ENCODE measurements at regions of chr11 and their contacts with region 1.

Region 1: GRCh38 chr11:3091791-3092602 is 34.8 kb upstream of the CARS1 start:
- DNase-seq: peak; percentile 83
- ATAC-seq: peak; percentile 92
- H3K4me3 Mint-ChIP-seq: no peak overlapping the region
- H3K27ac Mint-ChIP-seq: no peak overlapping the region
- H3K4me1 Mint-ChIP-seq: peaks cover 6% of the 10 kb centered on the region
- H3K27me3 Mint-ChIP-seq: peaks cover 3% of the 10 kb centered on the region

Region 2: GRCh38 chr11:2885676-2886081 is 206.3 kb before region 1 on chr11 and contains the start of gene CDKN1C:
- CTCF ChIA-PET with region 1: interaction called, 37 read pairs
- DNase-seq: peak; percentile 83
- ATAC-seq: peak; percentile 92
- H3K4me3 Mint-ChIP-seq: peak within 1 kb of the TSS; percentile 75
- H3K27ac Mint-ChIP-seq: no peak within 1 kb of the TSS
- H3K4me1 Mint-ChIP-seq: peaks cover 9% of the 10 kb centered on the region
- H3K27me3 Mint-ChIP-seq: peaks cover 35% of the 10 kb centered on the region
- total RNA-seq, gene CDKN1C: 0.44 to 0.87 TPM

Region 3: DNA sequence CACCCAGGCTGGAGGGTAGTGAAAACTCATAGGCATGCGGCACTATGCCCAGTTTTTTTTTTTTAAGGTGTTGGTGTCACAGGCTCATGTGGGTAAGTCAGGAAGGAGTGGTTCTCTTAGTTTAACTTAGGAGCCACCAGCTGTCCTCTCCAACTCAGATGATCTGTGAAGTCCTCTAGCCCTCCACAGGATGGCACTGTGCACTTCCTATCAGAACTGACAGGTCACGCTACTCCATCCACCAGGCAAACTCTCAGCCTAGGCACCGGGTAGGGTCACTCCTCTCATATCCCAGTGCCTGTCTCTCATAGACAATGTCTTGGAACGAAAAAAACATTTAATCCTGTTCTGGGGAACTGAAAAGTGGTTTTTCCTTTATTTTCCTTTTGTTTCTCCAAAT is 116.4 kb before region 1 on chr11:
- CTCF ChIA-PET with region 1: interaction called, 22 read pairs
- DNase-seq: peak; percentile 69
- ATAC-seq: peak; percentile 86
- H3K4me3 Mint-ChIP-seq: no peak overlapping the region
- H3K27ac Mint-ChIP-seq: peak overlapping the region; percentile 64
- H3K4me1 Mint-ChIP-seq: peaks cover 41% of the 10 kb centered on the region
- H3K27me3 Mint-ChIP-seq: no peaks in the 10 kb centered on the region

Region 4: DNA sequence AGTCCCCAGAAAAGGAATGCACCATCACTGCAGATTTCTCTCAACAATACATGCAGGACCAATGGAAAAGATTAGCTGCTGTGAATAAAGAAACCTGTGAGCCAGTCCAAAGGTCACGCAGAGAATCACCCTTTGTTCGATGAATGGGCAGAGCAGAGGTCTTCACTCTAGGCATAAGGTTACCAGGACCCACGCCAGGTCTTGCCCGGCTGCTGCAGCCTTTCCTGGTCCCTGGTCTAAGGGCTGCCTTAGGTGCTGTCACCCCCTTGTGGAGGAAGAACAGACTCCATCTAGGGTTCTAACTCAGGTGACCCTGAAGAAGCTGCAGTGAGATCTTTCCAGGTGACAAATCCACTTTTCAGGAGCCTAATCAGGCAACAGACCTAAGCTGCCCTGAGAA is 70.9 kb before region 1 on chr11:
- CTCF ChIA-PET with region 1: interaction called, 31 read pairs
- DNase-seq: peak; percentile 68
- ATAC-seq: peak; percentile 74
- H3K4me3 Mint-ChIP-seq: no peak overlapping the region
- H3K27ac Mint-ChIP-seq: no peak overlapping the region
- H3K4me1 Mint-ChIP-seq: peaks cover 67% of the 10 kb centered on the region
- H3K27me3 Mint-ChIP-seq: no peaks in the 10 kb centered on the region

Region 5: DNA sequence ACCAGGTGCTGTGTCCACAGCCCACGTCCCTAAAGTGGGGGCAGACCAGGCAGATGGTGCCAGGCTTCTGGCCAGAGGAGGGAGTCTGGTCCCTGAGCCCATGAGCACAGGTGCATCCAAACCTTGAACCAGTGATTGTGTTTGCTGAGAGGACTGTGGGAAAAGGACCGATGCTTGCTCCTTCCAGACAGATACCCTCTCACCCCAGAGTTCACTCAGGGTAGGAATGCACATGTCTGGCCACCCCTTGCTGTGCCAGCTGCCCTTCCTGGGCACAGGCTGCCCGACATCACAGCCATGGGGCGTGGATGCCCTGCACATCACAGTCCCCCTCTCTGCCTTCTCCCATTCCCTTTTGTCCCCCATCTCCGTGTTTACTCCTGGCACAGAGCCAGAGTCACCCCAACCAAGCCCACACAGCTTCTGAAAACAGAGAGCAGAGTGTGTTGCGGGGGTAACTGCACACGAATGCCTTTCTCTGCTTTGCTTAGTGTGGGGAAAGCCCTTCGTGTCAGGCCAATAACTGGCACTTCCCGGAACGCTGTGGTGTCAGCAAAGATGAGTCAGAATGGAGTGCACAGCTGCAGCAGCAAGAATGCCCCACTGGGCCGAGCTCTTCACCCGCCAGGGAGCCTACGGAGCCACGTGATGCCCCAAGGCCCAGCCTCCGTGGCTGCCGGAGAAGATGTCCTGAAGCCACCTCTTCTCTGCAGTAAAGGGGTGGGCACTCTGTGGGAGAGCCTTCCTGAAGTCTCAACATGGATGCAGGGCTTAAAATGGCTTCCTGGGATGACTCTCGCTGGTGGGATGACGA is 42.4 kb before region 1 on chr11:
- CTCF ChIA-PET with region 1: interaction called, 70 read pairs
- DNase-seq: peak; percentile 93
- ATAC-seq: peak; percentile 98
- H3K4me3 Mint-ChIP-seq: peak overlapping the region; percentile 58
- H3K27ac Mint-ChIP-seq: peak overlapping the region; percentile 97
- H3K4me1 Mint-ChIP-seq: peaks cover 52% of the 10 kb centered on the region
- H3K27me3 Mint-ChIP-seq: no peaks in the 10 kb centered on the region

Region 6: DNA sequence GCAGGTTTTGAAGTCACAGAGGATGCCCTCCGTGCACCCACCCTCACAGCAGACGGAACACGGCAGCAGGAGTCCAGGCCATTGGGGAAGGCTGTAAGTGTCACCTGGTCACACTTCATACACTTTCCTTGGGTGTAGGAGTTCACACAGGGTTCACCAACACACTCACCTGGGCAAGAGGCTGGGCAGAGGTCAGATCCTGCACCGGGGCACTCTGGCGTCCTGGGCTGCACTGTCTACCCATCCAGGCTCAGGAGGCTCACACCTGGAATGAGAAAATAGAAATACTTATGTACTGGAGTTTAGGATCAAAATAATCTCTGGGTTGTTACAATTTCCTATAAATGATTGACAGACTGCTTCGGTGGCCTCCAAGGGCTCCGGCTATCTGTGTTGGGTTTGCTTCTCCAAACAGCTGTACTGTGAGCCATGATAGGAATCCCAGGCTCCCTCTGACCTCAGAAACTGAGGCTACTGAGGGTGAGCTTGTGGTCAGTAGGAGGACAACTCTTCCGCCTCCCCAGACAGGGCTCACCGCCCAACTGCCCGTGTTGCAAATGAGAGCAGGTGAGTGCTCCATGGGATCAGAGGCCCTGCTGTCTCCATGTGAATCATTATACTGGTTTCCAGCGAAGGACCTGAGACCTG is 14.7 kb before region 1 on chr11:
- CTCF ChIA-PET with region 1: interaction called, 10 read pairs
- DNase-seq: no peak
- ATAC-seq: no peak
- H3K4me3 Mint-ChIP-seq: no peak overlapping the region
- H3K27ac Mint-ChIP-seq: no peak overlapping the region
- H3K4me1 Mint-ChIP-seq: no peaks in the 10 kb centered on the region
- H3K27me3 Mint-ChIP-seq: peaks cover 26% of the 10 kb centered on the region

Region 7: DNA sequence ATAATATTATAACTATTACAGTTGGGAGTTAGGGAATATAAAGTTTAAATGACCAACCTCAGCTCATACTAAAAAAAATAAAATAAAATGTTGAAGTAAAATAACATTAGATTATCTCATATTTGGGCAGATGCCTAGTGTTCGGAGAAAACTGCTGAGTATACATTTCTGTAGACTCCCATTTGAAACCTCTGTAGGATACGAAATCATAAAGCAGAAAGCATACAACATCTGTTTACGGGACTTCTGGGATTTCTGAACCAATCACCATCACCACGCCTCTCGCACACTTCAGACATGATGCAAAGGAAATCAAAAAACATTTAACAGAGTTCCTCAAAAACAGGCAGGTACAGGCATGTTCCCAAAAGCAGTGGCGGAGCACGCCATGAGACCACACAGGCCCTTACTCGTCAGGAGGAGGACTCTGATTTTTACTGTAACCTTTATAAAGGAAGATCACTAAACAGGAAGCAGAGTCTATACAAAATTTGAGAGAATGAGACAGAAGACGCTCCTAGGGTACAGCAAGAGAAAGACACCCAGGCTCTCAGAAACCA is 278.4 kb after region 1 on chr11:
- CTCF ChIA-PET with region 1: no interaction called
- DNase-seq: no peak
- ATAC-seq: no peak
- H3K4me3 Mint-ChIP-seq: no peak overlapping the region
- H3K27ac Mint-ChIP-seq: no peak overlapping the region
- H3K4me1 Mint-ChIP-seq: peaks cover 1% of the 10 kb centered on the region
- H3K27me3 Mint-ChIP-seq: no peaks in the 10 kb centered on the region